AG04449 (cell line): ENCODE measurements at regions of chr10 and their contacts with region 1.

Region 1: GRCh38 chr10:26725837-26726727 is 28.6 kb downstream of the PDSS1 start:
- DNase-seq: no peak
- H3K4me3 ChIP-seq: no peak overlapping the region
- CTCF ChIP-seq: peak; percentile 65

Region 2: DNA sequence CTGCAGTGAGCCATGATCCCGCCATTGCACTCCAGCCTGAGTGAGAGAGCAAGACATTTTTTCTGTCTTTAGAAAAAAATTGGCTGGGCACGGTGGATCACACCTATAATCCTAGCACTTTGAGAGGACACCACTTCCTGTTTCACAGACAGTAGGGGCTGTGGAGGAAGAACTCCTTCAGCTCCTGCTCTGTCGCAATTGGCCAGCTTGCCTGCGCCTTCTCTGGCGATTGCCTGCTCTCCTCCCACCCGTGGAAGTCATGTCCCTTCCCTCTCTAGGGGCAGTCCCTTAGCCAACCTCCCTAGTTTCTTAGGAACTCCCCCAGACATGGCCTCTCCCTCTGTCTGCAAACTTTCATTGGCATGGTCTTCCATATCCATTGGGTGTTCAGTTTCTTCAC is 19.9 kb before region 1 on chr10:
- CTCF ChIA-PET with region 1: interaction called, 15 read pairs
- POLR2A ChIA-PET with region 1: no interaction called
- DNase-seq: no peak
- H3K4me3 ChIP-seq: no peak overlapping the region
- CTCF ChIP-seq: no peak

Region 3: GRCh38 chr10:26714415-26715136 is 11.5 kb before region 1 on chr10:
- CTCF ChIA-PET with region 1: interaction called, 36 read pairs
- POLR2A ChIA-PET with region 1: no interaction called
- DNase-seq: no peak
- H3K4me3 ChIP-seq: no peak overlapping the region
- CTCF ChIP-seq: no peak

Region 4: DNA sequence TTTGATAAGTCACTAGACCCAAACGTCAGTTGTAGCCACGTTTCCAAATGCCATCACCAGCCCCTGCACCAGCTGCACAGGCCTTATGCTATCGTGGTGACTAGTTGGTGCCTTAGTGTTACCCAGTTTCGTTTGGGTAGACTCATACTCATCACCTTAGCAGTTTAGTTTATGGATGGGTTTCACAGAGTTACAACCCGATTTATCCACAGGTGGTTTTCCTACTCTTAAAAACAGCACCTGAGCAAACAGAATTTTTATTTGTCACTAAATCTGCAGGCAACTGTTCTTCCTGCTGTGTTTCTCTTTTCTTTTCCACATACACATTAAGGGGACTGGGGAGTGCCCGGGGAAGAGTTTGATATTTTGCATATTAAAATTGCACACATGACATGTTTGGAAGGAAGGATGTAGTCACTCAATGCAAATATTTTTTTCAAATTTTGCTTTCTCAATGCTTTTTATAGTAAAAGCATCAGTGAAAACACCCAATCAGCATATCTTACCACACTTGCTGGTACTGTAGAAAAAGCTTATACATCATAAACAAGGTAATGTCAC is 13.1 kb after region 1 on chr10:
- CTCF ChIA-PET with region 1: interaction called, 43 read pairs
- POLR2A ChIA-PET with region 1: no interaction called
- DNase-seq: no peak
- H3K4me3 ChIP-seq: no peak overlapping the region
- CTCF ChIP-seq: no peak

Region 5: DNA sequence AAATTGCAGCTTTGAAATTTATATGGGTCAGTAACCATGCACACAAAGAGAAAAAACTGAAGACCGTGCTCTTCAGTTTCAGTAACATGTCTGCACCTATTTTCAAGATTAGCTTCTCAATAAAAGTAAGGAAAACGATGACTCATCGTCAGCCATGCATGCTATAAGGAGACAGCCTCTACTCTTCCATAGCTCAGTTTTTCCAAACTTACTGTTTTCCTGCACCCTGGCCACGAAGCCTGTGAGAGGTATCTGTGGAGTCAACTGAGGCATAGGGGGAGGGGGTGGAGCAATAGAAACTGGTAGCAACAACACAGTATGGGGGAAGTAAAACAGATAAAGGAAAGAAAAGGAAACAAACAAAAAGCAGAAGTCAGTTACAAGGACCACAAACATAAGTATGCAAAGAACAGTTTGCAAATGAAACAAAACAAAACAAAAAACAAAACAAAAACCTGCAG is 29.4 kb after region 1 on chr10:
- CTCF ChIA-PET with region 1: interaction called, 16 read pairs
- POLR2A ChIA-PET with region 1: no interaction called
- DNase-seq: no peak
- H3K4me3 ChIP-seq: no peak overlapping the region
- CTCF ChIP-seq: no peak

Region 6: DNA sequence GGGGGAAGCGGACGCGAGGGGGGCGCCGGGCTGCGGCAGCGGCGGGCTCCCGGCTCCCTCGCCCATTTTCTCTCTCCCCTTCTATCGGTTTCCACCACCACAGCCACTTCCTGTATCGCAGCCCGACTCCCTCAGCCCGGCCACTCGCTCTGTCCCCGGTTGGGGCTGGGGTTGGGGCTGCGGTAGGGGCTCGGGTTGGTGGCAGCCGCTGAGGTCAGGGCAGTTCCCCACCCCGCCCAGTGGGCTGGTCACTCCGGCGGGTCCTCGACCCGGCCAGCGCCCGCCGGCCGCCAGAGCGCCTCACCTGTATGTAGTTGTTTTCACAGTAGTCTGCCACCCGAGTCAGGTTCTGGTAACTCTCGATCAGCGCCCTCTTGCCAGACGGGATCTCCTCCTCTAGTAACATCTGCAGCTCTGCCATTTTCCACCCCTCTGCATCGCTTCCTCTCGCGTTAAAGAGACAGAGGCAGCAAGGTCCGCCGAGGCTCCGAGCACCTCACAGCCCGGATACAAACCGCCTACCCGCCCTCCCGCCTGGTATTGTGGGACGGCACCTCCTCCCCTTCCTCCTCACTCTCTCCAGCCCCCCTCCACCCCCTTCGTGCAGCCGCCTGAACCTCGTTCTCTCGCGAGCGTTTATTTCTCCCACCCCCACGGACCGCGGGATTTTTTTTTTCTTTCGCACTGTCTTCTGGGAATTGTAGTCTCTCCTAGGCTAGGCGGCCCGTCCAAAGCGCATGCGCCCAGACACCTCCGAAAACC is 134.5 kb after region 1 on chr10 and contains the start of gene ABI1:
- CTCF ChIA-PET with region 1: interaction called, 23 read pairs
- POLR2A ChIA-PET with region 1: interaction called, 3 read pairs
- DNase-seq: peak; percentile 92
- H3K4me3 ChIP-seq: peak within 1 kb of the TSS; percentile 85
- CTCF ChIP-seq: no peak

Region 7: DNA sequence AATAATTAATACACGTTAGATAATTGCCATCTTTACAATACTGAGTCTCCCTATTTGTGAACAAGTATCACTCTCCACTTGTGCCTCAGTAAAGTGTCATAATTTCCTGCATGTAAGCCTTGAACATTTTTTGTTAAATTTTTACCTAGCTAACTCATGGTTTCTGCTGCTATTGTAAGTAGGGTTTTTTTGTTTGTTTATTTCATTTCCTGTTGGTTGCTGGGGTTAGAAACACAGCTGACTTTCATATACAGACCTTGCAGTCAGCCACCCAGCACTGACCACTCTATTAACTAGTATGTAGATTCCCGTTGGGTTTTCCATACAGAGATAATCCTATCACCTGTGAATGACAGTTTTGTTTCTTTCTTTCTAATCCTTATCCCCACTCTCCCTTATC is 1443.4 kb after region 1 on chr10:
- CTCF ChIA-PET with region 1: no interaction called
- POLR2A ChIA-PET with region 1: no interaction called
- DNase-seq: no peak
- H3K4me3 ChIP-seq: no peak overlapping the region
- CTCF ChIP-seq: no peak